Activated naive CD4-positive, alpha-beta T cell treated with anti-CD3 and anti-CD28 coated beads for 36 hours (primary cell): ENCODE measurements at regions of chr2 and their contacts with region 1.

Region 1: DNA sequence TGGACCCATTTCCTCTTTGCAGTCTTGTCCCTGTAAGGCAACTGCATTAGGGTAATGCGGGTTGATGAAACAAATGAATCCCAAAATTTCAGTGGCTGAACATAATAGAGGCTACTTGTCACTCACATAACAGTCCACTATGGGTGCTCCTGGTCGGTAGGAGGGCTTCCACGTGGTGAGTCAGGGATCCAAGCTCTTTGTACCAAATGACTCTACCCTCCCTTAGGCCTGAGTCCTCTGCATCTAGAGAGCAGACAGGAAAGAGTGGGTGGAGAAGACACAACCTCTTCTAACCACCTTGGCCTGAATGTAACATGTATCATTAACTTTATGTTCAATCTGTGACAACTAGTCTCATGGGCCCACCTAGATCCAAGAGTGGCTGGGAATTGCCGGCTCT is 86.2 kb upstream of the HAAO start:
- DNase-seq: peak; percentile 45
- H3K4me3 Mint-ChIP-seq: no peak overlapping the region
- H3K27ac Mint-ChIP-seq: no peak overlapping the region
- H3K4me1 Mint-ChIP-seq: peaks cover 29% of the 10 kb centered on the region
- H3K27me3 Mint-ChIP-seq: no peaks in the 10 kb centered on the region

Region 2: GRCh38 chr2:42895791-42896135 is 17.2 kb after region 1 on chr2:
- CTCF ChIA-PET with region 1: interaction called, 4 read pairs
- intact Hi-C with region 1: loop called (anchors 1 kb)
- DNase-seq: no peak
- H3K4me3 Mint-ChIP-seq: no peak overlapping the region
- H3K27ac Mint-ChIP-seq: no peak overlapping the region
- H3K4me1 Mint-ChIP-seq: peaks cover 2% of the 10 kb centered on the region
- H3K27me3 Mint-ChIP-seq: peaks cover 3% of the 10 kb centered on the region

Region 3: DNA sequence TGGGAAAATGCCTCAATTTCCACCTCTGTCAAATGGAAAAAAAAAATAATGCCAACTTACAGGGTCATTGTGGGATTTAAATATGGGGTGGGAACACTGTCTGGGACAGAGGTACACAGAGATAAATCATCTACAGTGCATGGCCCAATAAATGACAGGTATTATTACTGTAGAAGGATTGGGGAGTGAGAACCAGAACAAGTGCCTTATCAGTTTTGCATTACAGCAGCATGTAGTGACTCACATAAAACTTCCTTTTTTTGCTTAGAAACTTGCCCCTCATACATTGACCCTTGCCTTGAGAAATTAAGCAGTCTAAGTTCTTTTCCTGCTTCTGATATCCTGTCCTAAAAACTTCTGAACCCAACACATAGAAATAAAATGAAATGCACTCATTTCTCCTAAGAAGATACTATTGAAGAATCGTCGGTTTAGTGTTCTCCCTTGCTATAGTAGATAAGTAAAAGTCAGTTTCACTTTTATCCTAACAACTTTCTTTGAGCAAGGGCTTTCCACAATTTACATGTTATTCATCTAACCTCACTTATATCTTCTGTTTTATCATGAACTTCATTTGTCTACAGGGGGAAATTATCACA is 34.8 kb after region 1 on chr2:
- CTCF ChIA-PET with region 1: no interaction called
- intact Hi-C with region 1: no loop called
- DNase-seq: no peak
- H3K4me3 Mint-ChIP-seq: no peak overlapping the region
- H3K27ac Mint-ChIP-seq: no peak overlapping the region
- H3K4me1 Mint-ChIP-seq: peaks cover 6% of the 10 kb centered on the region
- H3K27me3 Mint-ChIP-seq: no peaks in the 10 kb centered on the region

Region 4: DNA sequence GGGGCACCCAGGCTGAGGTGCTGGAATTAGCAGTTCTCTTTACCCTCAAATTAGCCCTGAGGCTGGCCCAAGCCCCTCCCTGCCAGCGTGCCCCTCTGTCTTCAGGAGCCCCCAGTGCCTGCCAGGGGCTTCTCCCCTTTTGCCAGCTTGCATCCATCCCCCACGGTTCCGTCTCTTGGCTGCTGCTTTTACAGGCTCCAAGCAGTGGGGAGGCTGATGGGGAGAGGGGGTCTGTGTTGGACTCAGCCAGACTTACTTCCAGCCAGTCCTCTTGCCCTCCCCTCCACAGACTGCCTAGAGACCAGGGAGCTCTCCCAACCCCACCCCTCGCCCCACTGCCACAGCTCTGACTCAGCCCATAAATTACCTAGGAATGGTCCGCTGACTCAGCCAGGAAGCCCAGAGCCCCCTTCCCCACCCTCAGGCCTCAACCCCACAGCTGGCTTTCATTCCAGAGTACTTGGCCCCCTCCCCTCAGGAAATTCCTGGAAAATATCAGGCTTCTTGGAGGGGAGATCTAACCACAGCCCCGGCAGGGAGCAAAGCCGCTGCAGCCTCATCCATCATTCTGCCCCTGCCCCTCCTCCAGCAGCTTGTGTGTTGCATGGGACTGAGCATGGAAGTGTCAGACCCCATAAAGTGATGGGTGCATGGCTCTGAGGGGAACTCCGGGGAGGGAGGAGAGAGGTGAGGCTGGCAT is 163.2 kb after region 1 on chr2:
- CTCF ChIA-PET with region 1: no interaction called
- intact Hi-C with region 1: no loop called
- DNase-seq: no peak
- H3K4me3 Mint-ChIP-seq: no peak overlapping the region
- H3K27ac Mint-ChIP-seq: no peak overlapping the region
- H3K4me1 Mint-ChIP-seq: peaks cover 7% of the 10 kb centered on the region
- H3K27me3 Mint-ChIP-seq: no peaks in the 10 kb centered on the region